ENCODE measurements at regions of chr6 and their contacts with region 1.

Region 1: GRCh38 chr6:4358414-4359114 is 223.2 kb upstream of the ECI2 start:
- DNase-seq: peak; percentile 54 to 93 (median 80)
- H3K4me3 ChIP-seq: peak overlapping the region in 11 of 59 donors; percentile 3 to 34 (median 19)
- H3K27ac ChIP-seq: peak overlapping the region in 53 of 59 donors; percentile 2 to 86 (median 61)
- H3K27me3 ChIP-seq: no peaks in the 10 kb centered on the region
- CTCF ChIP-seq: peak in 3 of 56 donors; percentile 10 to 24 (median 12)

Region 2: DNA sequence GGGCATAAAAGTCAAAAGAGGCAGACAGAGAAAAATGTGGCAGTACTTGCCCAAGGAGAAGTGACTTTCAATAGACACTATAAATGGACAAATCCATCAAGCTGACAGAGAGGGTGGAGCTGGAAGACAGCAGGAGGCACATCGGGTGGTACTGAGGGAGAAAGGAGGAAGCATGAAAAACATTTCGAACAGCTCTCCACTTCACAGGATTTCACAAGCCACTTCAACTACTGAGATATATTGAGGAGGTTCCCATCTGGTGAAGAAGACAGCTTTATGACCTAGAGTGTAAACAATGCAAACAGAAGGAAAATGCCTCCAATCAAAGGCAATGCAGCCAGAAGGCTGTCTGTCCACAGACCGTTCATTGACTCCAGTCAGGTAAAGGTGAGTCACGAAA is 36.2 kb after region 1 on chr6:
- intact Hi-C with region 1: loop called in 1 of 2 experiments (anchors 2 kb)
- DNase-seq: no peak
- H3K4me3 ChIP-seq: no peak overlapping the region
- H3K27ac ChIP-seq: no peak overlapping the region
- H3K27me3 ChIP-seq: no peaks in the 10 kb centered on the region
- CTCF ChIP-seq: no peak

Region 3: GRCh38 chr6:4460586-4461475 is 102.3 kb after region 1 on chr6:
- intact Hi-C with region 1: loop called in 1 of 2 experiments (anchors 5 kb)
- DNase-seq: peak; percentile 13 to 77 (median 62)
- H3K4me3 ChIP-seq: peak overlapping the region in 51 of 59 donors; percentile 6 to 55 (median 30)
- H3K27ac ChIP-seq: peak overlapping the region in 6 of 59 donors; percentile 1 to 57 (median 31)
- H3K27me3 ChIP-seq: no peaks in the 10 kb centered on the region
- CTCF ChIP-seq: no peak

Region 4: GRCh38 chr6:4491906-4492260 is 133.3 kb after region 1 on chr6:
- intact Hi-C with region 1: no loop called
- DNase-seq: no peak
- H3K4me3 ChIP-seq: no peak overlapping the region
- H3K27ac ChIP-seq: no peak overlapping the region
- H3K27me3 ChIP-seq: no peaks in the 10 kb centered on the region
- CTCF ChIP-seq: no peak

Measured in dorsolateral prefrontal cortex (tissue), 120 donors.